ENCODE measurements at regions of chr12 and their contacts with region 1.

Region 1: GRCh38 chr12:53978477-53979356 is 4.0 kb upstream of the HOTAIR start:
- DNase-seq: peak; percentile 60
- H3K4me3 ChIP-seq: no peak overlapping the region
- H3K27ac ChIP-seq: no peak overlapping the region
- H3K4me1 ChIP-seq: peaks cover 0 to 32% (median 18%) of the 10 kb centered on the region in 4 donors
- H3K27me3 ChIP-seq: peaks cover 100% of the 10 kb centered on the region
- CTCF ChIP-seq: no peak
- EP300 ChIP-seq: no peak
- POLR2A ChIP-seq: no peak

Region 2: DNA sequence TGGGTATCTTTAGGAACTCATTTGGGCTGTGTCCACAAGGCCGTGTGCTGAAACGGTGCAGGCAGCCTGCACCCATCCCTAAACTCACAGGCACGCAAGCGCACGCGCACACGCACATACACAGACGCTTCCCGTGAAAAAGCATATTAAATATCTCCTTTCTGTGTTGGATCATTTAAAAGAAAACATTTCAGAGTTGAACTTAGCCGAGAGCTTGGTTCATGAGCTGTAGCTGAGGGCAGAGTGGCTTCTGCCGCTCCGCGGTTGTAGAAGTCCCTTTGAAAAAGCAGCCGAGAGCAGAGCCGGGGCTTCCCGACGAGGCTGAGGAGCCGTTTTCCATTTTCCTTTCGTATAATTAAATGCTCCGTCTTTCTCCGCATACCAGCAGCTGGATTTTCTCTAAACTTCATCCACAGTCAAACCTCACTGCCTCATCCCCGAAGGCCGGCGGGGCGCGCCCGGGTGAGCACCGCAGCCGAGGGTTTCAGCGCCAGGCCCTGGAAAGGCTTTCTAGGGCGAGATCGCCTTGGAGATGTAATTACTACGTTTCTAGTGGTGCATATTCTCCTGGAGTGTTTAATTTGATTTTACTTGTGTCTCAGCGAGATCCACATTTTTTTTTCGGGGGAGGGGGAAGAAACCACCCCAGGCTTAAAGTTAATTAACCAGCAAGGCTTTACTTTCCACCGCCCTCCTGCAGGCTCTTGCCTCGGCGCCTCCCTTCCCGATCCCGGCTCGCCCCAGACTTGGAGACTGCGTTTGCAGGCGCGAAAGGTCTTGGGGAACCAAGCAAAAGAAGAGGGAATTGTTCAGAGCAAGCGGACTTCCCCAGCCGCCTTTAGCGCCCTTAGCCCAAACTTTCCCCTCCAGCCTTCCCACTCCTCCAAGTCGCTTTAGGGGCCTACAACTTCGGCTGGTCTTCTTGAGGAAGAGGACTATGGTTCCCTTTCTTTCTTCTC is 43.1 kb before region 1 on chr12:
- in situ Hi-C with region 1: no loop called
- intact Hi-C with region 1: loop called (anchors 1 kb)
- DNase-seq: no peak
- H3K4me3 ChIP-seq: no peak overlapping the region
- H3K27ac ChIP-seq: no peak overlapping the region
- H3K4me1 ChIP-seq: peaks cover 0 to 12% (median 3%) of the 10 kb centered on the region in 4 donors
- H3K27me3 ChIP-seq: peaks cover 100% of the 10 kb centered on the region
- CTCF ChIP-seq: no peak
- EP300 ChIP-seq: no peak
- POLR2A ChIP-seq: no peak

Region 3: DNA sequence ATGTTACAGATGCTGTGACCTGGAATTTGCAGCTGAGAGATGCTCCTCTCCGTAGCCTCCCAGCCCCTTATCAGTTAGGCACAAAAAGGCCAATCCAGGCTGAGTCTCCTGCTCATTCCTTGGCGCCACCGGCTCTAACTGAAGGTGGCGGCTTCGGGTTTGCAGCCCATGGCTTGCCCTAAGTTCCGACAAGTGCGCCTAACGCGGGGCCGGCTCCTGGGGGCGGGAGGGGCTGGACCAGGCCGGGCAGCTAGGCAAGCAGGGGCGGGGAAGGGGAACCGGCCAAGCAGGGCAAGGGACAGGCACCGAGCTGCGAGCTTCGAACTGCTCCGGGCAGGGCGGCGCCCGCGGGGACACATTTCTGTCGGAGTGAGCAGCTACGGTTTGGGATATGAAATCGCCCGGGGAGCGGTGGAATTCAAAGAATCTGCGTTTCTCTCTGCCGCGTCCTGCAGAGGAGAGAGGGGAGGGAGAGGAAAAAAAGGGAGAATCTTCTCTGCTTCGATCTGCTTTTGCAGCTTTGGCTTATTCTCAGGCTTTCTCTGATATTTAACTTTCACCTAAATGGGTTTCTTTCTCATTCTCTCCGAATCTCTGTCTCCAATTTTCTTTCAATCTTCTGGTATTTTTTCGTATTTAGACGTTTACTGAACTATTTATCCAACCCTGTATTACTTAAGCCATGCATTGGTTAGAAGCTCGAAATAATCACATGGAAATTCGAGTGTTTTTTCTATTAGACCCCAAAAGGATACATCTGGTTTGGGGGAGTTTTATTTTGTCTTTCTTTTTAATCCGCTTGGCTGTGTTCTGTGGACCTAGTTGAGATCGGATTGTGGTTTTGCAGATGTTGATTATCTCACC is 25.6 kb before region 1 on chr12:
- in situ Hi-C with region 1: no loop called
- intact Hi-C with region 1: no loop called
- DNase-seq: no peak
- H3K4me3 ChIP-seq: no peak overlapping the region
- H3K27ac ChIP-seq: no peak overlapping the region
- H3K4me1 ChIP-seq: peaks cover 0 to 3% (median 0%) of the 10 kb centered on the region in 4 donors
- H3K27me3 ChIP-seq: peaks cover 100% of the 10 kb centered on the region
- CTCF ChIP-seq: no peak
- EP300 ChIP-seq: no peak
- POLR2A ChIP-seq: no peak

Region 4: GRCh38 chr12:55673638-55674037 is 1694.9 kb after region 1 on chr12:
- in situ Hi-C with region 1: no loop called
- intact Hi-C with region 1: no loop called
- DNase-seq: no peak
- H3K4me3 ChIP-seq: no peak overlapping the region
- H3K27ac ChIP-seq: peak overlapping the region; percentile 19 to 40 (median 24)
- H3K4me1 ChIP-seq: peaks cover 0 to 46% (median 13%) of the 10 kb centered on the region in 4 donors
- H3K27me3 ChIP-seq: no peaks in the 10 kb centered on the region
- CTCF ChIP-seq: no peak
- EP300 ChIP-seq: no peak
- POLR2A ChIP-seq: no peak